ENCODE measurements at regions of chr7 and their contacts with region 1.

Region 1: GRCh38 chr7:51366930-51367613 is 50.5 kb upstream of the COBL start:
- DNase-seq: peak; percentile 51 to 63
- H3K4me3 ChIP-seq: no peak overlapping the region
- H3K27ac ChIP-seq: no peak overlapping the region
- H3K4me1 ChIP-seq: peaks cover 7 to 15% (median 10%) of the 10 kb centered on the region in 4 experiments
- H3K27me3 ChIP-seq: no peaks in the 10 kb centered on the region
- CTCF ChIP-seq: peak; percentile 76 to 95 (median 89)
- EP300 ChIP-seq: no peak
- POLR2A ChIP-seq: no peak
- RAD21 ChIP-seq: peak; percentile 93 to 97

Region 2: DNA sequence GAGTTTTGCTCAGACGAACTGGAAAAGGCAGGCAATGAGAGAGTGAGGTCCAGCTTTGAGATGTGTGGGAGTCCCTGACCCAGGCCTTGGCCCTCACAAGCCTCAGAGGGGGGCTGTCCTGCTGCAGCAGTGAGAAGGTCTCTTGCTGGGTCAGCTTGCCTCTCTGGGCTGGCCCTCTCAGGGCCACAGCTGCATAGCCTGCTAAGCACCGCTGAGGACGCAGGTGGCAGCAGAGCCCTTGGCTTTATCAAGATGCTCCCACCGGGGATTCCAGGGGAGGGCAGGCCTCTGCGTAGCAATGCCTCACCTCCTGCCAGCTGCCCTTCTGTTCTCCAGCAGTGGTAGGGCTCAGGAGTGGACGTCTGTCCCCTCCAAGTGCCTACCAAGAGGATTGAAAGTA is 179.1 kb before region 1 on chr7:
- CTCF ChIA-PET with region 1: interaction called, 352 read pairs
- POLR2A ChIA-PET with region 1: no interaction called
- DNase-seq: peak; percentile 50 to 82
- H3K4me3 ChIP-seq: no peak overlapping the region
- H3K27ac ChIP-seq: no peak overlapping the region
- H3K4me1 ChIP-seq: peaks cover 0 to 7% (median 4%) of the 10 kb centered on the region in 4 experiments; a peak in 4 of 7 replicates
- H3K27me3 ChIP-seq: no peaks in the 10 kb centered on the region
- CTCF ChIP-seq: peak; percentile 86 to 97 (median 90)
- EP300 ChIP-seq: no peak
- POLR2A ChIP-seq: no peak
- RAD21 ChIP-seq: peak; percentile 95

Region 3: GRCh38 chr7:51289623-51290303 is 77.3 kb before region 1 on chr7:
- CTCF ChIA-PET with region 1: interaction called, 17 read pairs
- POLR2A ChIA-PET with region 1: no interaction called
- DNase-seq: no peak
- H3K4me3 ChIP-seq: no peak overlapping the region
- H3K27ac ChIP-seq: no peak overlapping the region
- H3K4me1 ChIP-seq: peaks cover 4 to 18% (median 11%) of the 10 kb centered on the region in 4 experiments; a peak in 6 of 7 replicates
- H3K27me3 ChIP-seq: no peaks in the 10 kb centered on the region
- CTCF ChIP-seq: no peak
- EP300 ChIP-seq: no peak
- POLR2A ChIP-seq: no peak
- RAD21 ChIP-seq: no peak

Region 4: DNA sequence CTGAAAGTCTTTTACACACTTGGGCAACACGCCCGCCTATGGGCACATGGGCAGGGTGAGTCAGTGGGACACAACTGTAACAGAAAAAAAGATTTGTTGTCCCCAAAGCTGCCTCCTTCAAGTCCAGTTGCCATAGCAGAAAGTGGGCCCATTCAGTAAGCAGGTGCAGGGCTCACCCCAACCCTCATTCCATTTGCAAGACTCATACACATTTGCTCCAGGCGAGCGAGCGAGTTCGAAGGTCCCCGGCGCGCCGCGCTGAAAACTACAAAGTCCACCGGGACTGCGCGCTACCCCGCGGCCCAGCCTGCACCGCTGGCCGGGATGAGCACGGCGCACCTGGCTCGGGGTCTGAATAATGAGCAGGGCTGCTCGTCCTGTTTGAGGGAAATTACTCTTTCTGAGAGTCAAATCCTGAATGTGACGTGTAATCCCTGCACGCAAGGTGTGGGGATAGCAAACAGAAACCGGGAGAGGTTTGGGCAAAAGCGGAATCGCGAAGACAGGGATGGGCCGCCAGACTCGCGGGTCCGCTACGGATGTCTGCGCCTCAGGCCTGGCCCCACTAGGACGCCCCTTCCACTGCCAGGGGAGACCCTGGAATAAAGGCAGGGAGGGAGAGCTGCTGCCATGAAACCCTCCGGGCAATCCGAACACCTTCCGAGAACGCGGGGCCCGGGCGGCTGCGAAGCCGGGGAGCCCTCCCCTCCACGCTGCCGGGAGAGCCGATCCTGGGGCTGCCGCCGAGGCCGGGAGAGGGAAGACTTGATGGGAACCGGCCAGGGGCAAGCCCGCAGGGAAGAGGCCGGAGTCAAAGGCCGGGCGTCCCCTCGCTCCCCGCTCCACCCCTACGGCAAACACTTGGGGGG is 51.4 kb before region 1 on chr7:
- CTCF ChIA-PET with region 1: interaction called, 92 read pairs
- POLR2A ChIA-PET with region 1: no interaction called
- DNase-seq: peak in 1 of 2 experiments; percentile 77
- H3K4me3 ChIP-seq: peak overlapping the region; percentile 48 to 72 (median 66)
- H3K27ac ChIP-seq: no peak overlapping the region; the same call in 1 of the 2 replicates
- H3K4me1 ChIP-seq: peaks cover 2 to 18% (median 10%) of the 10 kb centered on the region in 4 experiments
- H3K27me3 ChIP-seq: peaks cover 0 to 4% (median 1%) of the 10 kb centered on the region in 4 experiments; a peak in 4 of 7 replicates
- CTCF ChIP-seq: peak in 1 of 3 experiments; percentile 3; a peak in 1 of 4 replicates
- EP300 ChIP-seq: no peak
- POLR2A ChIP-seq: peak in 1 of 2 experiments; percentile 48; a peak in 2 of 3 replicates
- RAD21 ChIP-seq: no peak

Region 5: GRCh38 chr7:51344406-51345138 is 22.5 kb before region 1 on chr7:
- CTCF ChIA-PET with region 1: interaction called, 42 read pairs
- POLR2A ChIA-PET with region 1: no interaction called
- DNase-seq: no peak
- H3K4me3 ChIP-seq: no peak overlapping the region
- H3K27ac ChIP-seq: no peak overlapping the region
- H3K4me1 ChIP-seq: no peaks in the 10 kb centered on the region
- H3K27me3 ChIP-seq: no peaks in the 10 kb centered on the region
- CTCF ChIP-seq: no peak
- EP300 ChIP-seq: no peak
- POLR2A ChIP-seq: no peak
- RAD21 ChIP-seq: no peak

Region 6: DNA sequence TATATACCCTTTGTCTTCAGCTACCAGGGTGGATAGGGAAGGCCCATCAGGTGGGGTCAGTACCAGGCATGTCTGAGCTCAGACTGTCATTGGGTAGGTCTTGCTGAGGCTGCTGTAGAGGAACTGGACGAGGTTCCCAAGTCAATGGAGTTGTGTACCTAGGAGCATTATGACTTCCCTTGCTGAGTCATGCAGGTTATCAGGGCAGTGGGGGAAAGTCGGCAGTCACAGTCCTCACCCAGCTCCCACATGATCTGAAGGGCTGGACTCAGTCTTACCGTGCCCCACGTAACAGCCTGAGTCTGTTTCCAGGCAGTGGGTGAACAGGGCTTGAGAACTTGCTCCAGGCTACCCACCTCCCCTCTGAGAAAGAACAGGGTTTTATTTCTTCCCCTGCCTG is 210.3 kb after region 1 on chr7:
- CTCF ChIA-PET with region 1: no interaction called
- POLR2A ChIA-PET with region 1: no interaction called
- DNase-seq: no peak
- H3K4me3 ChIP-seq: no peak overlapping the region
- H3K27ac ChIP-seq: no peak overlapping the region
- H3K4me1 ChIP-seq: no peaks in the 10 kb centered on the region
- H3K27me3 ChIP-seq: no peaks in the 10 kb centered on the region
- CTCF ChIP-seq: no peak
- EP300 ChIP-seq: no peak
- POLR2A ChIP-seq: no peak
- RAD21 ChIP-seq: no peak

Measured in H1 (cell line).